ENCODE measurements at regions of chr18 and their contacts with region 1.

Region 1: GRCh38 chr18:67385455-67385854 is 131.1 kb downstream of the DSEL start:
- DNase-seq: no peak
- ATAC-seq: no peak
- H3K4me3 ChIP-seq: no peak overlapping the region
- H3K4me3 Mint-ChIP-seq: no peak overlapping the region
- H3K27ac ChIP-seq: no peak overlapping the region
- H3K27ac Mint-ChIP-seq: no peak overlapping the region
- H3K4me1 ChIP-seq: no peaks in the 10 kb centered on the region
- H3K4me1 Mint-ChIP-seq: peaks cover 0 to 3% (median 0%) of the 10 kb centered on the region in 7 donors
- H3K27me3 ChIP-seq: no peaks in the 10 kb centered on the region
- H3K27me3 Mint-ChIP-seq: peaks cover 0 to 7% (median 4%) of the 10 kb centered on the region in 5 donors

Region 2: DNA sequence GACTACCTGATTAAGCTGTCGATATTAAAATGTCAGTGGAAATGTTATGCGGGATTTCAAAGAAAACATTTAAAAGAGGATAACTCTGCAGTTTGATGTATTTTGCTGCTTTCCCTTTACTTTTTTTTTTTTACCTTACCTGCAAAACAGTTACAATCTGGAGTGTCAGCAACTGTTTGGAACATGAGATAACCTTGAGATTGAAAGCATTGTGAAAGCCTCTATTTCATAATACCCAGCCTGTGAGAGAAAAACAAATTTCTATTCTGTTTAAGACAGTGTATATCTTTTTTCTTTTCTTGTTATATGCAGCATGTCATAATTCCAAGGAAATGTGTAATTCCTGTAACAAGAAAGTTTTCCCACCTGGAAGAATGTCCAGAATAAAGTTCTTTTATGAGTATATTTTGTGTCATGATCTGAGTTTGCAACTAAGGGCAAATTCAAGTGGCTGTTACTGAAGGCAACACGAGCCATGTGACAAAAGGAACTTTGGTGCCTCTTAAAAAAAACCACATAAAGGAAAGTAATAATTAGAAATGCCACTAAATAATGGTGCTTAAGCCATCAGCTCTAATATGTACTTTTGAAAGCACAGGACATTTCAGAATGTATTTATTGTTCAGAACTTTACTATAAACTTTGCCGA is 428.0 kb after region 1 on chr18:
- CTCF ChIA-PET with region 1: no interaction called
- POLR2A ChIA-PET with region 1: no interaction called
- intact Hi-C with region 1: loop called in 1 of 2 experiments (anchors 5 kb)
- DNase-seq: no peak
- ATAC-seq: no peak
- H3K4me3 ChIP-seq: no peak overlapping the region
- H3K4me3 Mint-ChIP-seq: no peak overlapping the region
- H3K27ac ChIP-seq: no peak overlapping the region
- H3K27ac Mint-ChIP-seq: no peak overlapping the region
- H3K4me1 ChIP-seq: no peaks in the 10 kb centered on the region
- H3K4me1 Mint-ChIP-seq: no peaks in the 10 kb centered on the region
- H3K27me3 ChIP-seq: no peaks in the 10 kb centered on the region
- H3K27me3 Mint-ChIP-seq: peaks cover 0 to under 1% (median 0%) of the 10 kb centered on the region in 5 donors

Measured in naive thymus-derived CD4-positive, alpha-beta T cell (primary cell).